Calu3 (cell line): ENCODE measurements at regions of chr16 and their contacts with region 1.

Region 1: DNA sequence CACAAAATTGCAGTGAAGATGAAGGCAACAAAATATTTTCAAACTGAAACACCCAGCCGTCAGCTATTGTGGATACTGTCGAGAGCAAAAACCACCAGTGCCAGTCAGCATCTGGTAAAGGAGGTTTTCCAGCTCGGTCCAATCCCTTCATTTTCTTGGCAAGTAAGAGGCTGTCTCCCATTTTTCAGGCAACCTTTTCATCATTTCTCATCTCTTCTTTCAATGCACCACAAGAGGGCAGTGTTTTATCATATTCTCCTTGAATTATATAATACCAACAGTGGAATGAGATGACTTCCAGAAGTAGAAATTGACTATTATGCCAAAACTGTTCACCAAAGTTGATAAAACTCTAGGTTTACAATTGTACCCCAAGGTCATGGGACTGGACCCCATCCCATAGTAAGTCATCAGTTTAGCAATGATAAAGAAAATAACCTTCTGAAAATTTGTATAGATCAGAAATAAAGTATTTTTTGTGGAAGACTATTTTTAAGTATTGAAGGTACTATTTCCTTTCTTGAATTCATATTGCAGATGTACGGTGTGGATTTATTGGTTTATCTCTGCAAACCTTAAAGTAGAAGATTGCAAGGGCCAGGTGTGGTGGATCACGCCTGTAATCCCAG is 16.8 kb downstream of the NQO1 start:
- DNase-seq: no peak
- H3K4me3 Mint-ChIP-seq: no peak overlapping the region
- H3K27ac Mint-ChIP-seq: peak overlapping the region; percentile 37
- H3K4me1 Mint-ChIP-seq: peaks cover 33% of the 10 kb centered on the region
- H3K27me3 Mint-ChIP-seq: no peaks in the 10 kb centered on the region
- CTCF ChIP-seq: peak; percentile 48

Region 2: GRCh38 chr16:69417520-69418199 is 291.9 kb before region 1 on chr16:
- CTCF ChIA-PET with region 1: no interaction called
- intact Hi-C with region 1: no loop called
- DNase-seq: no peak
- H3K4me3 Mint-ChIP-seq: no peak overlapping the region
- H3K27ac Mint-ChIP-seq: no peak overlapping the region
- H3K4me1 Mint-ChIP-seq: no peaks in the 10 kb centered on the region
- H3K27me3 Mint-ChIP-seq: no peaks in the 10 kb centered on the region
- CTCF ChIP-seq: no peak

Region 3: GRCh38 chr16:69691980-69692911 is 17.3 kb before region 1 on chr16:
- CTCF ChIA-PET with region 1: no interaction called
- intact Hi-C with region 1: no loop called
- DNase-seq: no peak
- H3K4me3 Mint-ChIP-seq: no peak overlapping the region
- H3K27ac Mint-ChIP-seq: no peak overlapping the region
- H3K4me1 Mint-ChIP-seq: no peaks in the 10 kb centered on the region
- H3K27me3 Mint-ChIP-seq: no peaks in the 10 kb centered on the region
- CTCF ChIP-seq: no peak

Region 4: DNA sequence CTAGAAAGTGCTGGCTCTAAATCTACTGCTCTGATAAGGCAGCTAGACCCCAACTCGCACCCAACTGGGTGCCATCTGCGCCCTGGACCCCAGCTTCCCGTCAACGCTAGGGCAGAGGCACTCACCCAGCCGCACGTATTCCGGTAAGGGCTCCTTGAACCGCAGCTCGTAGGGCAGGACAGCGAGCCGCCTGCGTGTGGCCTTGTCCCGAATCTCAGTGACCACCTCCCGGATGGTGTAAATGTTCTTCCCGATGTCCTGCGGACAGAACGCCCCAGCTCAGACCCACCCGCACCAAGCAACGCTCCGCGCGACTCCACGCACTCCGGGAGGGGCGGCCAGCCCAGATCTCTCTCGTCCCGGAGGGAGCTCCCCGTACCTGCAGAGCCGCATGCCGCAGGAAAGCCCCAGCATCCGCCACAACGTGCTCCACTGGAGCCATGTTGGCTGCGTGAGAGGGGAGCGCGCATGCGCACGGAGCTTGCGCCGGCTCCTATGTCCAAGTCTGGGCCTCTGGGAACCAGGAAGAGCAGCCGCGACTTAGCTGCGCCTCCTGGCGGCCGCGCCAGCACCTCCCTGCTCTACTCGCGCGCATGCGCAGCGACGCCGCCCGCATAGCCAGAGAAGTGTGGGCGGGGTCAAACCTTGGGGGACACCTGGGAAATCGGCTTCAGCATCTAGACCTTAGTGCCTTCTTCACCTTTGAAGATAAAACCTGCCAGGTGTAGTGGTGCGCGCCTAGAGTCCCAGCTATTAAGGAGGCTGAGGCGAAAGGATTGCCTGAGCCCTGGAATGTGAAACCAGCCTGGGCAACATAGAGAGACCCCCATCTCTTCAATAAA is 45.1 kb after region 1 on chr16 and contains the start of gene NOB1:
- CTCF ChIA-PET with region 1: interaction called, 13 read pairs
- intact Hi-C with region 1: loop called (anchors 1 kb)
- DNase-seq: peak; percentile 98
- H3K4me3 Mint-ChIP-seq: peak within 1 kb of the TSS; percentile 98
- H3K27ac Mint-ChIP-seq: peak within 1 kb of the TSS; percentile 93
- H3K4me1 Mint-ChIP-seq: peaks cover 16% of the 10 kb centered on the region
- H3K27me3 Mint-ChIP-seq: peaks cover 13% of the 10 kb centered on the region
- CTCF ChIP-seq: peak; percentile 97
- total RNA-seq, gene NOB1: 82.4 and 88.2 TPM in 2 replicates